ENCODE measurements at regions of chr4 and their contacts with region 1.

Region 1: DNA sequence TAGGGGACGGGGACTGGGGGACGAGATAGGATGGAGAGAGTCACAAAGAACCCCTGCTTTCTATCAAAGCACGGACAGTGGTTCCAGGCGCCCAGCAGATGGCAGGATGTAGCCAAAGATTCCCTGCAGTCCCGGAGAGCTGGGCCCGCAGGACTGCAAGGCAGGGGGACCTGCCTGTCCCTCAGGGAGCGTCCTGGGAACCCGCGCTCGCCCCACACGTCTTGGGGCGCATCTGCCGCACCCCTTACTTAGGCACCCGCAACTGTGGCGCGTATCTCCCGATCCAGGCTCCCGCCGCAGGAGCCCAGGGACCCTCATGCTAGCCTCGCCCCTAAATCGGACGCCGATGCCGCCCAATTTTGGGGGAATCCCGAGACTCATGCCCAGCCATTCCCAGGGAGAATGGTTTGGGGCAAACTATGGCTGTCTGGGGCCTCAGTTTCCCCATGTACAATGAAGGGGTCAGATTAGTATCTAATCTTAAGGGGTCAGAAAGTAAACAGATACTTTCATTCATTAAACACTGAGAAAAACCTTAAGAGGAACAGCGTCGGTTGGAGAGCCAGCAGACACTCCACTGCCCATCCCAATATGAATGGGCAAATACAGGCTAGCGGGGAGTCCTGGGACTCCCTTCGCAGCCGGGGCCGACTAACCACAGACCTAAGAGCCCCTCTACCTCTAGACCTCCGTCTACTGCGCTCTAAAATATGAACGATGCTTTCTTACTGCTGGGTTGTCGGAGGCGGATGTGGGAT is 581 bp upstream of the STK32B start:
- DNase-seq: peak; percentile 80

Region 2: GRCh38 chr4:4960574-4960973 is 90.1 kb before region 1 on chr4:
- intact Hi-C with region 1: no loop called
- DNase-seq: no peak

Region 3: DNA sequence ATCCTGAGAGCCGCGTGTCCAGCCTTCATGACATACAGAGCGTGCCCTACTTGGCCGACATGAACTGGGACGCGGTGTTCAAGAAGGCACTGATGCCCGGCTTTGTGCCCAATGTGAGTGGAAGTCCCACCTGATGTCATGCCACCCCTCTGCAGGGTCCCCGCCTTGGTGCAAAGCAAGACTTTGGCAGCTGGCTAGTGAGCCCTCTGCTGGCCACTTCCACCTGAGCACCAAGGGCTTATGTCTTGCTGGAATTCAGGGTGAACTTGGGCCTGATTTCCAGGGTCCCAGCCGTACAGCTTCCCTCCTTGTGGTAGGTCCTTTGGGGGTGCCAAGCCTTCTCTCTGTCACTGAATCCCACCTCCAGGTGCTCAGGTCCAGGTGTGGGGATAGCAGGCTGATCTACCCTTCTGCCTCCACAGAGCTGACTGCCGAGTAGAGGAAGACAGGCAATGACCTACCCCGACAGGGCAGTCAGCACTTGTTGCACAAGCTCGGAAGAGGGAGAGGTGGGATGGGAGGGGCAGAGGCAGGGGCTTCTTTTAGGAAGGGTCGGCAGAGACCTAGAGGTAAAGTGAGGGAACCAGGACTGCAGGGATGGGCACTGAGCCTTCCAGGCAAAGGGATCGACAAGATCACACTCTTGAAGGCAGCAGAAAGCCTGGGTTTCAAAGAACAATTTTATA is 409.6 kb after region 1 on chr4:
- intact Hi-C with region 1: loop called (anchors 5 kb)
- DNase-seq: peak; percentile 56

Region 4: DNA sequence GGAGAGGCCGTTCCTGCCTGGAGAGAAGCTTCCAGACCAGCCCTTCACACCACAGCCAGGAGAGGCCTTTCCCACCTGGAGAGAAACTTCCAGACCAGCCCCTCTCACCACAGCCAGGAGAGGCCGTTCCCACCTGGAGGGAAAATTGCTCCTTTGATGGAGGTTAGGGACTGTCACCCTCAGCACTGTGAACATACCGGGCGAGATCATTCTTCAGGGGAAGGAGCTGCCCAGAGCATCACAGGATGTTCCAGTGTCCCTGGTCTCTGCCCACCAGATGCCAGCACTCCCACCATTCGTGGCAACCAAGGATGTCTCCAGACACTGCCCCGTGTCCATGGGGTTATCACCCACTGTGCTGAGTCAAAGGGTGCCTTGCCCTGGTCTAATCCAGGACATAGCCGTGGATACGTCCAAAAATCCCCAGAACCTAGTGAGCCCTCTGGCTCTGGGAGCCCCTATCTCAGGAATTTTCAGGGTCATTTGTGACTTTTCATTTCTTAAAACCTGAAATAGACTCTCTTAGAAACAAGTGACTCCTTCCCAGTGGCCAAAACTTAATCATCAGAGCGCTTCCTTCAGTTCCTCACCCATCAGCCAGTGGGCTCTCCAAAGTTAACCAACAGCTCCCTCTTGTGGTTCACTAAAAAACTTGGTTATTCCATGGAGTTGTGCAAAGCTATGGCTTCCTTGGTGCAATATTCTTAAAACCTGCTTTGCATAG is 762.0 kb after region 1 on chr4:
- intact Hi-C with region 1: loop called (anchors 5 kb)
- DNase-seq: peak; percentile 12